Caco-2 (cell line): ENCODE measurements at regions of chr1 and their contacts with region 1.

Region 1: DNA sequence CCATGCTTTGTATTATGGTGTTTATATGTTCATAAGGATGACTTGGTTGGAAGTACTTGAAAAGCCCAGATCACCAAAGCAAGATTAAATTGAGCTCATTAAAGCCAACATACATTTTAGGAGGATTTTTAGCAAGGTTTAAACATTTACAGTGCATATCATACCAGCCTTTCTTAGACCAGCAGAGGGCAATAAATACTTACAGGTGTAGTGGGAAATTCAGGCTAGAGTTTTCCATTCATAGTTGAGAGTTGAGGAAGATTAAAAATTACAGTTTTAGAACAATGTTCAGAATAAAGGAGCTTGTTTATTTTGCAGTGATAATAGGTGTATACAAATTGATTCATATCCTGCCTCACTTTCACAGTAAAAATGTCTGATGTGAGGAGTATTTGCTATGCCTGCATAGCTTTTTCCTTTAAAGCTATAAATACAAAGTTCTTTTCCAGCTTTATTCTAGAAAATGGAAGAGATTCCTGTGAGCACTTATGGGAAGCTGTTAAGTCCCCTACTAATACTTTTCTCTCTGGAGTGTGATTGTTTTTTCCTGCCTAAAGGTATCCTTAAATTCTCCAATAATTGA is 35.3 kb downstream of the DTL start:
- DNase-seq: peak in 1 of 2 experiments; percentile 36
- H3K4me3 ChIP-seq: no peak overlapping the region
- H3K4me3 Mint-ChIP-seq: no peak overlapping the region
- H3K27ac Mint-ChIP-seq: no peak overlapping the region
- H3K4me1 ChIP-seq: no peaks in the 10 kb centered on the region
- H3K4me1 Mint-ChIP-seq: no peaks in the 10 kb centered on the region
- H3K27me3 ChIP-seq: no peaks in the 10 kb centered on the region
- H3K27me3 Mint-ChIP-seq: no peaks in the 10 kb centered on the region
- CTCF ChIP-seq: peak; percentile 63 to 70

Region 2: GRCh38 chr1:212055333-212055732 is 15.5 kb before region 1 on chr1:
- CTCF ChIA-PET with region 1: no interaction called
- POLR2A ChIA-PET with region 1: no interaction called
- intact Hi-C with region 1: no loop called
- DNase-seq: no peak
- H3K4me3 ChIP-seq: no peak overlapping the region
- H3K4me3 Mint-ChIP-seq: no peak overlapping the region
- H3K27ac Mint-ChIP-seq: no peak overlapping the region
- H3K4me1 ChIP-seq: no peaks in the 10 kb centered on the region
- H3K4me1 Mint-ChIP-seq: no peaks in the 10 kb centered on the region
- H3K27me3 ChIP-seq: no peaks in the 10 kb centered on the region
- H3K27me3 Mint-ChIP-seq: no peaks in the 10 kb centered on the region
- CTCF ChIP-seq: no peak

Region 3: DNA sequence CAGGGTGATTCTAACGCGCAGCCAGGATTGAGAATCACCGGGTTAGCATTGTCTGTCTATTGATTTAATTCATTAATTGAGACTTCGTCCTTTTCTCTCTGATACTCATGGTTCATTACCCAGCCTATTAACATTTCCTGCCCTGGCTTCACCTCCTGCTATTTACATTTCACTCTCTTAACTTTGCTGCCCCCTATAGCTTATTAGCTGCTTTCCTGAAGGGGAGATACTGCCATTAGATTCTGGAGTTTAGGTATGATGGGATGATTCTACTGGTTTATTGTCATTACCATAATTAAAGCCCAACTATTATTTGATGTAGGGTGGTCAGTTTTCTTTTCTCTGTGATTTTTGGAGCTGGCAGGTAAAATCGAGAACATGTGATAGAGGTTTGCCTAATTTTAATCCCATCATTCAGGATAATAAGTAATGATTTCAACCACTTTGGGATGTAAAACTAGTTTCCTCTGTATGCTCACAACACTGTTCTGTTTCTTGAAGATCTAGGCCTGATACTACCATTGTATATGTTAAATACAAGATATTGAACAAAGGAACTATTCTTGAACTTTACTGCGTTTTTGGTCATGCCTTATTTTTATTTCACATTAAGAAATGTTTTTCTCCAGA is 220.8 kb after region 1 on chr1:
- CTCF ChIA-PET with region 1: interaction called, 22 read pairs
- POLR2A ChIA-PET with region 1: no interaction called
- intact Hi-C with region 1: loop called (anchors 1 kb)
- DNase-seq: peak in 1 of 2 experiments; percentile 58
- H3K4me3 ChIP-seq: no peak overlapping the region
- H3K4me3 Mint-ChIP-seq: no peak overlapping the region
- H3K27ac Mint-ChIP-seq: no peak overlapping the region
- H3K4me1 ChIP-seq: peaks cover 50% of the 10 kb centered on the region
- H3K4me1 Mint-ChIP-seq: peaks cover 27% of the 10 kb centered on the region
- H3K27me3 ChIP-seq: no peaks in the 10 kb centered on the region
- H3K27me3 Mint-ChIP-seq: no peaks in the 10 kb centered on the region
- CTCF ChIP-seq: peak; percentile 53 to 75

Region 4: DNA sequence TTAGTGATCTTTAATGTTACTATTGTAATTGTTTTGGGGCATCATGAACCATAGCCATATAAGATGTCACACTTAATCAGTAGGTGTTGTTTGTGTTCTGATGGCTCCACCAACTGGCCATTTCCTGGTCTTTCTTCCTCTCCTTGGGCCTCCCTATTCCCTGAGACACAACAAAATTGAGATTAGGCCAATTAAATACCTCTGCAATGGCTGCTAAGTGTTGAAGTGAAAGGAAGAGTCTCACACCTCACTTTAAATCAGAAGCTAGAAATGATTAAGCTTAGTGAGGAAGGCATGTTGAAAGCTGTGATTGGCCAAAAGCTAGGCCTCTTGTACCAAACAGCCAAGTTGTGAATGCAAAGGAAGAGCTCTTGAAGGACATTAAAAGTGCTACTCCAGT is 245.1 kb after region 1 on chr1:
- CTCF ChIA-PET with region 1: interaction called, 4 read pairs
- POLR2A ChIA-PET with region 1: no interaction called
- intact Hi-C with region 1: loop called (anchors 2 kb)
- DNase-seq: peak in 1 of 2 experiments; percentile 21
- H3K4me3 ChIP-seq: no peak overlapping the region
- H3K4me3 Mint-ChIP-seq: no peak overlapping the region
- H3K27ac Mint-ChIP-seq: no peak overlapping the region
- H3K4me1 ChIP-seq: peaks cover 22% of the 10 kb centered on the region
- H3K4me1 Mint-ChIP-seq: peaks cover 12% of the 10 kb centered on the region
- H3K27me3 ChIP-seq: no peaks in the 10 kb centered on the region
- H3K27me3 Mint-ChIP-seq: no peaks in the 10 kb centered on the region
- CTCF ChIP-seq: peak in 1 of 2 experiments; percentile 15